ENCODE measurements at regions of chr1 and their contacts with region 1.

Region 1: GRCh38 chr1:93345633-93346420 is at the start of gene DR1:
- H3K4me3 Mint-ChIP-seq: peak within 1 kb of the TSS; percentile 99
- H3K27ac Mint-ChIP-seq: peak within 1 kb of the TSS; percentile 98
- H3K4me1 Mint-ChIP-seq: no peaks in the 10 kb centered on the region
- H3K27me3 Mint-ChIP-seq: no peaks in the 10 kb centered on the region

Region 2: DNA sequence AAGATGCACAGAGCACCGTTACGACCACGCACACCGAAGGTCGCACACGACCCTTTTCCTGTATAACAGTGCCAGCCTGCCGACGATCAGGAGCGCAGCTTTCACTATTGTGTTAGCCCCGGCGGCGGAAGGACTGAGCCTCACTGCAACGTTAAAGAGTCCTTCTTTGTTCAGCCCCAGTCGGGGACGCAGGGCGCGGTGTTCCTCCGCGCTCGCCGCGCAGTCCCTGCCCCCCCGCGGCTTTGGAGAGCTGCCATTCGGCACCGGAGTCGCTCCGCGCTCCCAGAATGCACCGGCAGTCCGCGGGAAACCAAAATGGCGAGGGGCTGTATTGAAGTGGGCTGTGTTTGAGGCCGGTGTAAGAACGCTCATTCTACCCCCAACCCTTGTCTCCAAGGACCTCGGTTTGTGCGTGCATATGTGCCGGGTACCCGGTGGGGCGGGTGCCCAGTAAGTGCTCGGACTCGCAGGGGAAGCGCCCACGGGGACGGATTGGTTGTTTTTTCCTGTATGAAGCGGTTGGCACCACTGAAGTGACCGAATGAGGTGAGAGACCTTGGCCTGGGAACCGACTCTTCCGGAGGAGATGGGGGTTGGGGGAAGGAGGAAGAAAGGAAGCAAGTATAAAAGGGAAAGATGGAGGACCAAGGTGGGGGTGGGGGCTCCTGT is 266.7 kb before region 1 on chr1 and contains the start of gene MTF2:
- intact Hi-C with region 1: loop called (anchors 10 kb)
- H3K4me3 Mint-ChIP-seq: peak within 1 kb of the TSS; percentile 91
- H3K27ac Mint-ChIP-seq: peak within 1 kb of the TSS; percentile 91
- H3K4me1 Mint-ChIP-seq: peaks cover 48% of the 10 kb centered on the region
- H3K27me3 Mint-ChIP-seq: no peaks in the 10 kb centered on the region

Region 3: GRCh38 chr1:93179886-93180722 is 165.7 kb before region 1 on chr1 and contains the start of gene TMED5:
- intact Hi-C with region 1: loop called (anchors 5 kb)
- H3K4me3 Mint-ChIP-seq: peak within 1 kb of the TSS; percentile 95
- H3K27ac Mint-ChIP-seq: peak within 1 kb of the TSS; percentile 100
- H3K4me1 Mint-ChIP-seq: peaks cover 47% of the 10 kb centered on the region
- H3K27me3 Mint-ChIP-seq: no peaks in the 10 kb centered on the region

Region 4: GRCh38 chr1:93304716-93305138 is 41.1 kb before region 1 on chr1:
- intact Hi-C with region 1: loop called (anchors 5 kb)
- H3K4me3 Mint-ChIP-seq: no peak overlapping the region
- H3K27ac Mint-ChIP-seq: no peak overlapping the region
- H3K4me1 Mint-ChIP-seq: no peaks in the 10 kb centered on the region
- H3K27me3 Mint-ChIP-seq: no peaks in the 10 kb centered on the region

Region 5: GRCh38 chr1:93317207-93317606 is 28.6 kb before region 1 on chr1:
- intact Hi-C with region 1: loop called (anchors 1 kb)
- H3K4me3 Mint-ChIP-seq: no peak overlapping the region
- H3K27ac Mint-ChIP-seq: no peak overlapping the region
- H3K4me1 Mint-ChIP-seq: peaks cover 21% of the 10 kb centered on the region
- H3K27me3 Mint-ChIP-seq: no peaks in the 10 kb centered on the region

Measured in dendritic cell treated with granulocyte-macrophage colony-stimulating factor and Interleukin-4, amounts not matched to agents 40 ng/mL and 50 ng/mL, for 4 days (primary cell).